Psoas muscle (tissue), 8 donors: ENCODE measurements at regions of chr17 and their contacts with region 1.

Region 1: DNA sequence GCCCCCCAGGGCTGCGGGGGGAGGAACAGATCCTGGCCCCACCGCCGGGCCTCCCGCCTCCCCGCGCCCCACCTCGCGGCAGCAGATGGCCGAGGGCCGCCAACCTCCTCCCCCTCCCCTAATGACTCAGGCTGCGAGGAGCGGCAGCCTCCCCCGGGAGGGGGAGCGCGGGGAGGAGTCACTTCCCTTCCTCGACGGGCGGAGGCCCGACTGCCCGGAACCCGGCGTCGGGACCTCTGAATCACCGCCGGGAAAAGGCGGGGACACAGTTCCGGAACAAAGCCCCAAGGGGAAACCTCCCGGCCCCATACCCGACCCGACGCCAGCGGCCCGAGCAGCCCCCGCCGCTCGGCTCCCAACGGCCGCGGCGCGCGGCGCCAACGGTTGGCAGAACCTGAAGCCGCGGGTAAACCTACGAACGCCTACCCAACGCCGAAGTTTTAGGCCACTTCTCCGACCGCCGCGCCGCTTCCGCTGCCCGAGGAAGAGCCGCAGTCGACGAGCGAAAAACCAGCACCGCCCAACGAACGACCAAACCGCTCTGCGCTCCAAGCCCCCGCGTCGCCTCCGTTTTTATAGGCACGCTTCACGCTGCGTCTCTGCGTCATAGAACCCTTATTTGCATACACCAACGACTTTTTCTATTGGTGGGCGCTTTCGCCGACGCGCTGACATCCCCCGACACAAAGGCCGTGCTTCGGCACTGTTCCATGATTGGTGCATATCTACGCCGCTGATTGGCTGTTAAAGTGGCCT is 5.2 kb upstream of the UNK start:
- DNase-seq: peak; percentile 96 to 99
- ATAC-seq: peak; percentile 74 to 78 (median 75)
- H3K4me3 ChIP-seq: peak overlapping the region; percentile 88
- H3K27ac ChIP-seq: peak overlapping the region; percentile 99
- H3K4me1 ChIP-seq: peaks cover 45% of the 10 kb centered on the region
- H3K27me3 ChIP-seq: no peaks in the 10 kb centered on the region
- CTCF ChIP-seq: no peak

Region 2: GRCh38 chr17:75535119-75535537 is 244.3 kb before region 1 on chr17:
- intact Hi-C with region 1: no loop called
- DNase-seq: no peak
- ATAC-seq: no peak
- H3K4me3 ChIP-seq: no peak overlapping the region
- H3K27ac ChIP-seq: no peak overlapping the region
- H3K4me1 ChIP-seq: no peaks in the 10 kb centered on the region
- H3K27me3 ChIP-seq: no peaks in the 10 kb centered on the region
- CTCF ChIP-seq: no peak

Region 3: DNA sequence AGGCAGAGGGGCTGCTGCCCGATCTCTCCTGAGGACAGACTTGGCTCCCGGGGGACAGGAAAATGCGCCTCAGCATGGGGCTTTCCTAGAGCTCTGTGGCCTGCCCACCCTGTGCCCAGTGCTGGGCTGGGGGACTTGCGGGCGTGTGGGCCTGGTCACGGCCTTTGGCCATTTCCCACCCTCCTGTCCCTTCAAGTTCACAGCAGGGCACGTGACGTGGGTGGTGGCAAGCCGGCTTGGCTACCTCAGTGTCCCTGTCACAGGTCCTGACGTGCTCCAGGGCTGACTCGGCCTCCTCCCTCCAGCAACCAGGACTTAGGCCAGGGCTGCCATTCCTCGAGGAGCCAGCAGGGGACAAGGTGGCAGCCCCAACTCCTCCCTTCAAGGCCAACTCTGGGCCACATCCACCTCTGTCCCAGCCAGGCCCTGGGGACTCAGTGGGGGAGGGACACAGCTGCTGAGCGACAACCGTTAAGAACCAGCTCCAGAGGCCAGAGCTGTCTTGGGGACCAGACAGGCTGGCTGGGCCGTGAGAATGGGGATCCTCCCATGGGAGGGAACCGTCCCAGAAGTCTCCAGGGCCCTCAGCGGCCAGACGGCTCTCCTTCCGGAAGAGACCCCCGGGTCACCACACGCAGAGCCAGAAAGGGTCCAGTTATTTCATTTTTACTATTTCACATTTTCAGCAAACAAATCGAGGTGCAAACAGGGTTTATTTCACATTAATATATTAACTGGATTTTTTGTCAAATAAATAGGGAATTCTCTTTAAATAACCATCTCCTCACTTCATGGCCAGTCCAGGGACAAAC is 65.8 kb after region 1 on chr17:
- intact Hi-C with region 1: loop called in 1 of 2 experiments (anchors 5 kb)
- DNase-seq: peak; percentile 91 to 97
- ATAC-seq: peak; percentile 88 to 91 (median 89)
- H3K4me3 ChIP-seq: peak overlapping the region; percentile 19
- H3K27ac ChIP-seq: peak overlapping the region; percentile 95
- H3K4me1 ChIP-seq: peaks cover 42% of the 10 kb centered on the region
- H3K27me3 ChIP-seq: no peaks in the 10 kb centered on the region
- CTCF ChIP-seq: peak; percentile 90